WTC11 (cell line): ENCODE measurements at regions of chr2 and their contacts with region 1.

Region 1: DNA sequence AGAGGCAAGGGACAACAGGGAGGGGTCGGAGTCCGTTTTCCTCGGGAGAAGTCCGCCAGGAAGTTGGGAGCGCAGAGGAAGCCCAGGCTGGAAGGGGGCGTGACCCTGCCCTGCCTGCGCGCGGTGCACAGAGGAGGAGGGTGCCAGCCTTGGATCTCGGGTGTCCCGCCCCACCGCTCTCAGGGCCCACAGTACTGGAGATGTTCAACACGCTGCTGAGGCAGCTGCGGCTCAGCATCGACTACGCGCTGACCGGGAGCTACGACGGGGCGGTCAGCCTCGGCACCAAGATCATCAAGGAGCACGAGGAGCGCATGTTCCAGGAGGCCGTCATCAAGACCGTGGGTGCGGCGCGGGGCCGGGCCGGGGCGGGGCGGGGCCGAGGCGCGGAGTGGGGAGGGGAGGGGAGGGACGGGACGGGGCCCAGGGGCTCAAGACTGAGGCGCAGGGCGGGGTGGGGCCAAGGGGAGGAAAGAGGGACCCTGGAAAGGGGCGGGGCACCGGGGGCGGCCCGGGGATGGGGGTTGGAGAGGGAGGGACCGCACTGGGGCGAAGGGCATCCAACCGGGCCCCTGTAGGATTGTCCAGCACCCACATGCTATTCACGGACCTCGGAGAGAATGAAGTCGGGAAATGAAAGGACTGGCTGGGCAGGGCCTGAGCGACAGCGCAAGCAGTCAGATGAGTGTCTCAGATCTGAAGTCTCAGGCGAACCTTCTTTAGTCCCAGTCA is 36.6 kb downstream of the POMC start:
- DNase-seq: peak; percentile 47
- ATAC-seq: peak; percentile 56
- H3K4me3 Mint-ChIP-seq: peak overlapping the region; percentile 69
- H3K27ac Mint-ChIP-seq: no peak overlapping the region
- H3K4me1 Mint-ChIP-seq: peaks cover 13% of the 10 kb centered on the region
- H3K27me3 Mint-ChIP-seq: peaks cover 26% of the 10 kb centered on the region
- CTCF ChIP-seq: no peak

Region 2: DNA sequence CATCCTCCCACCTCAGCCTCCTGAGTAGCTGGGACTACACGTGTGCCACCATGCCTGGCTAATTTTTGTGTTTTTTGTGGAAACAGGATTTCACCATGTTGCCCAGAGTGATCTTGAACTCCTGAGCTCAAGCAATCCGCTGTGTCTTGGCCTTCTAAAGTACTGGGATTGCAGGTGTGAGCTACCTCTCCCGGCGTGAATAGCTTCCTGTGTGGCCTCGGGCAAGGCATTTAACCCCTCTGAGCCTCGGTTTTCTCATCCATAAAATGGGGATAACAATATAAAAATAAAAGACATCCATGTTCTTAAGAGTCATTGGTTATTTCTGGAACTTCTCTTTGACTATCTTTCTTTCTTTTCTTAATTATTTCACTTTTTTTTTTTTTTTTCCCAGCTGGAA is 192.4 kb before region 1 on chr2:
- CTCF ChIA-PET with region 1: interaction called, 11 read pairs
- POLR2A ChIA-PET with region 1: no interaction called
- DNase-seq: no peak
- ATAC-seq: no peak
- H3K4me3 Mint-ChIP-seq: no peak overlapping the region
- H3K27ac Mint-ChIP-seq: no peak overlapping the region
- H3K4me1 Mint-ChIP-seq: no peaks in the 10 kb centered on the region
- H3K27me3 Mint-ChIP-seq: no peaks in the 10 kb centered on the region
- CTCF ChIP-seq: no peak

Region 3: DNA sequence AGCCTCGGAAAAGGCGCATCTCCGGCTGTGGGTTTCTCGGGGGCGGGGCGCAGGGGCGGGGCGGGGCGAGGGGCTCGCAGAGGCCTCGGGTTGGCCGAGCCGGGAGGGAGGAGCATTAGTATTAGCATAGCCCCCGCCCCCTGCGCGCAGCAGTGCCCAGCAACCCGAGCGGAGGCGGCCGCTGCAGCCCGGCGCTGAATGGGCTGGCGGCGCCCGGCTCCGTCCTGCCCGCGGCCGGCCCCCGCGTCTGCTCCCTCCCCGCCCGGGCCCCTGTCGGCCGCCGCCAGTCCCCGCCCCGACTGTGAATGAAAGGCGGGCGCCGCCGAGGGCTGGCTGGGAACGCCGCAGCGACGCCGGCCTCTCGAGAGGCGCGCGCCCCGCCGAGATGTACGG is 89.8 kb before region 1 on chr2 and contains the start of gene EFR3B:
- CTCF ChIA-PET with region 1: interaction called, 31 read pairs
- POLR2A ChIA-PET with region 1: interaction called, 3 read pairs
- DNase-seq: peak; percentile 96
- ATAC-seq: peak; percentile 94
- H3K4me3 Mint-ChIP-seq: peak within 1 kb of the TSS; percentile 86
- H3K27ac Mint-ChIP-seq: peak within 1 kb of the TSS; percentile 91
- H3K4me1 Mint-ChIP-seq: peaks cover 32% of the 10 kb centered on the region
- H3K27me3 Mint-ChIP-seq: peaks cover 44% of the 10 kb centered on the region
- CTCF ChIP-seq: no peak
- total RNA-seq, gene EFR3B: 8.9 to 10.1 TPM (median 9.7 TPM) in 3 replicates

Region 4: GRCh38 chr2:25088817-25089516 is 42.8 kb before region 1 on chr2:
- CTCF ChIA-PET with region 1: interaction called, 16 read pairs
- POLR2A ChIA-PET with region 1: no interaction called
- DNase-seq: no peak
- ATAC-seq: peak; percentile 52
- H3K4me3 Mint-ChIP-seq: peak overlapping the region; percentile 14; the same call in 1 of the 2 replicates
- H3K27ac Mint-ChIP-seq: no peak overlapping the region; the same call in 1 of the 2 replicates
- H3K4me1 Mint-ChIP-seq: peaks cover 35% of the 10 kb centered on the region
- H3K27me3 Mint-ChIP-seq: peaks cover 46% of the 10 kb centered on the region
- CTCF ChIP-seq: no peak

Region 5: DNA sequence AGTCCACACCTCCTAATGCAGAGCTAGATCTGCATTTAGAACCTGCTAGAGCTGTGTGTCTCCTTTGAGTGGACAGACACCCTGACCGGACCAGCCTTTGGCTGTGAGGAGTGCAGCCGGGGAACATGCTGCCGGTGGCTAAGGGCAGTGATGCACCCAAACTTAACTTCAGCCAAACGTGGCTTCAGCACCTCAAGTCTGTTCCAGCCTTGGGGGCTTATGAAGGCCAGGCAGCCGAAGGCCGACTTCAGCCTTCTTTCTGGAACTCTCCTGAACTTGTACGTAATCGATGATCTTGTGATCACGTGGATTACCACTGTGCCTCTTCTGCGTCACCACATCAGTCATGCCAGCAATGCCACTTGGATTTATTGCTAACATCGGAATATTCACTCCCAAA is 12.5 kb before region 1 on chr2:
- CTCF ChIA-PET with region 1: interaction called, 10 read pairs
- POLR2A ChIA-PET with region 1: no interaction called
- DNase-seq: no peak
- ATAC-seq: no peak
- H3K4me3 Mint-ChIP-seq: no peak overlapping the region
- H3K27ac Mint-ChIP-seq: no peak overlapping the region
- H3K4me1 Mint-ChIP-seq: peaks cover 7% of the 10 kb centered on the region; the same call in 1 of the 2 replicates
- H3K27me3 Mint-ChIP-seq: no peaks in the 10 kb centered on the region
- CTCF ChIP-seq: no peak

Region 6: DNA sequence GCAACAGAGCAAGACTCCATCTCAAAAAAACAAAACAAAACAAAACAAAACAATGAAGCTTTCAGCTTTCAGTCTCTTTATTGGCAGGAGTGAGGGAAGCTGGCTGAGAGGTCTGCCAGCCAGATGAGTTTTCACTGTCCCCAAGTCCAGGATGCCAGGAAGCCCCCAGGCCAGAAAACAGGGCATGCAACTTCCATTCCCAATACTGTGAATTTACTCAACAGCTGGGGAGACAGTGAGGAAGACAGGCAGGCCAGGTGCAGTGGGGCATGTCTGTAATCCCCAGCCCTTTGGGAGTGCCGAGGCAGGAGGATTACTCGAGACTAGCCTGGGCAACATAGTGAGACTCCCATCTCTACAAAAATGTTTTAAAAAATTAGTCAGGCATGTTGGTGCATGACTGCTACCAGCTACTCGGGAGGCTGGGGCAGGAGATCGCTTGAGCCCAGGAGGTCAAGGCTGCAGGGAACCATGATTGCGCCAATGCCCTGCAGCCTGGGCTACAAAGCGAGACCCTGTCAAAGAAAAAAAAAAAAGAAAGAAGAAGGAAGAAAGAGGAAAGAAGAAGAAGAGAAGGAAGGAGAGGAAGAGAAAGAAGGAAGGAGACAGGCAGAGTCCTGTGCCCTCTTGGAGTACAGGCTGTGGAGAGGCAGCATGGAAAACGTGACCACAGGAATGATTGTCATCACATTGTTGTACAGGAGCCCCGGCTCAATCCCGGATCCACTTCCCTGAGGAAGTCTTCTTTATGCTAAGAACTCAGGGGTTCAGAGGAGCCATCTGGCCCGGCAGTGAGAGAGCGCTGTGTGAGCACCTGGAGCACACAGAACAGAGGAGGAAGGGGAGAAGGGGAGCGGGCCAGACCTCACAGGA is 65.8 kb after region 1 on chr2:
- CTCF ChIA-PET with region 1: interaction called, 10 read pairs
- POLR2A ChIA-PET with region 1: interaction called, 6 read pairs
- DNase-seq: no peak
- ATAC-seq: peak; percentile 18
- H3K4me3 Mint-ChIP-seq: no peak overlapping the region
- H3K27ac Mint-ChIP-seq: no peak overlapping the region
- H3K4me1 Mint-ChIP-seq: peaks cover 8% of the 10 kb centered on the region
- H3K27me3 Mint-ChIP-seq: no peaks in the 10 kb centered on the region; the same call in 1 of the 2 replicates
- CTCF ChIP-seq: no peak